ENCODE measurements at regions of chr6 and their contacts with region 1.

Region 1: DNA sequence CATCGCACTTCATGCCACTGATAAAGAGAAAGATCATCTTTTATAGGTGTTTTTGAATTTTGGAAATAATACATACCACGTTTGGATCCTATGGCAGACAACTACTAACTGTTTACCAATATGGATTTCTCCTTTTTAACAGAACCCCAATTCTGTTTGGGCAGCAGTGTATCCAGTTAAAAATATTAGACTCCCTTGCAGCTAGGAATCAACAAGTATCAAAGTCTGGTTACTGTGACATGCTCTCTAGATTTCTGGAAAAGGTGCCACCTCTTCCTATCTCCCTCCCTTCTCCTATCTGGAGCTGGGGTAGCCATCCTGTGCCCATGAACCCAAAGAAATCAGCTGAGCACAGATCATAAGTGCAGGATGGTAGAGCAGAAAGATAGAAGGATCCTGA is 54.1 kb upstream of the DTNBP1 start:
- DNase-seq: no peak
- ATAC-seq: no peak
- H3K4me3 ChIP-seq: no peak overlapping the region
- H3K27ac ChIP-seq: no peak overlapping the region
- H3K4me1 ChIP-seq: no peaks in the 10 kb centered on the region
- H3K27me3 ChIP-seq: peaks cover 16% of the 10 kb centered on the region
- CTCF ChIP-seq: no peak
- POLR2A ChIP-seq: no peak
- RAD21 ChIP-seq: no peak

Region 2: GRCh38 chr6:15200087-15200486 is 516.8 kb before region 1 on chr6:
- CTCF ChIA-PET with region 1: no interaction called
- POLR2A ChIA-PET with region 1: no interaction called
- dilution Hi-C with region 1: no loop called
- in situ Hi-C with region 1: no loop called
- intact Hi-C with region 1: no loop called
- DNase-seq: no peak
- ATAC-seq: no peak
- H3K4me3 ChIP-seq: no peak overlapping the region
- H3K27ac ChIP-seq: no peak overlapping the region
- H3K4me1 ChIP-seq: no peaks in the 10 kb centered on the region
- H3K27me3 ChIP-seq: no peaks in the 10 kb centered on the region
- CTCF ChIP-seq: no peak
- POLR2A ChIP-seq: no peak
- RAD21 ChIP-seq: no peak

Region 3: DNA sequence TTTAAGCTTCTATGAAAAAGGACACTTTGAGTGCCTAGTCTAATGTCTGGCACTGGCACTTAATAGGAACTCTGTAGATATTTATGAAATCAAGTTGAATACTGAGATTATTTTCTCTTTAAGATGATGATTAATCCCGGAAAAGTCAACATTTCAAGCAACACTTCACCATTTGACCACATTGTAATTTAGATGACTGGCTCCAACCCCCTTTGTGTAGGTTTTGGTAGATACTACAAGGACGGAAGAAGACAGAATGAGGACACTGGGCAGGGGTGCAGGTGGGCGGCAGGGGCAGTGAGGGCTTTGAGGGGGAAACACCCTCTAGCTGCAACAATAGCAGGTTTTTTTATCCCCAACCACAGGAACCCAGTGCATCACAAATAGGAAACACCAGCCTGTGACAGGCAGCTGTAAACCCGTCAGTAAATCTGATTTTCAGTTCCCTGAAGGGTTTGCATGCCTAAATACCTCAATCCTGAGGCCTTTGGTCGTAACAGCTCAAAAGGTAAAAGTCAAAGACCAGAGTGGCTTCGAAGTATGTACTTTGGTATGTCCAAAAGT is 58.6 kb before region 1 on chr6:
- CTCF ChIA-PET with region 1: no interaction called
- POLR2A ChIA-PET with region 1: no interaction called
- dilution Hi-C with region 1: no loop called
- in situ Hi-C with region 1: no loop called
- intact Hi-C with region 1: no loop called
- DNase-seq: no peak
- ATAC-seq: no peak
- H3K4me3 ChIP-seq: no peak overlapping the region
- H3K27ac ChIP-seq: no peak overlapping the region
- H3K4me1 ChIP-seq: peaks cover 2% of the 10 kb centered on the region; the same call in 1 of the 2 replicates
- H3K27me3 ChIP-seq: no peaks in the 10 kb centered on the region
- CTCF ChIP-seq: no peak
- POLR2A ChIP-seq: no peak
- RAD21 ChIP-seq: no peak

Region 4: DNA sequence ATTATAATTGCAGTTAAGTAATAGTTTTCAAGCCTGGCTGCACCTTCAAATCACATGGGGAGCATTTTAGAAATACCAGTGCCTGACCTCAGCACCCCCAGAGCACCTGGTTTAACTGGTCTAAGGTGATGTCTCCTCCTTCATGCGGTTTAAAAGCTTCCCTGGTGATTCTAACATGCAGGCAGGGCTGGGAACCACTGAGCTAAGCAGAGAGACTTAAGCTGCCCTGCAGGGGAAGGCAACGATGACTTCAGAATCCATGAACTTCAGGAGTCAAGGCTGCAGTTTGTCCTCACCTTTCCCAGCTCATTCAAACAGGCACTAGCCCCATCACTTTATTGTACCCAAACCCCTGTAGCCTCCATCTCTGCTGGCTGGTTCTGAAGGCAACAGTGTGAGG is 48.0 kb before region 1 on chr6:
- CTCF ChIA-PET with region 1: no interaction called
- POLR2A ChIA-PET with region 1: no interaction called
- dilution Hi-C with region 1: no loop called
- in situ Hi-C with region 1: no loop called
- intact Hi-C with region 1: loop called (anchors 1 kb)
- DNase-seq: no peak
- ATAC-seq: no peak
- H3K4me3 ChIP-seq: no peak overlapping the region
- H3K27ac ChIP-seq: no peak overlapping the region
- H3K4me1 ChIP-seq: no peaks in the 10 kb centered on the region
- H3K27me3 ChIP-seq: peaks cover 50% of the 10 kb centered on the region
- CTCF ChIP-seq: no peak
- POLR2A ChIP-seq: no peak
- RAD21 ChIP-seq: no peak